ENCODE measurements at regions of chr17 and their contacts with region 1.

Region 1: DNA sequence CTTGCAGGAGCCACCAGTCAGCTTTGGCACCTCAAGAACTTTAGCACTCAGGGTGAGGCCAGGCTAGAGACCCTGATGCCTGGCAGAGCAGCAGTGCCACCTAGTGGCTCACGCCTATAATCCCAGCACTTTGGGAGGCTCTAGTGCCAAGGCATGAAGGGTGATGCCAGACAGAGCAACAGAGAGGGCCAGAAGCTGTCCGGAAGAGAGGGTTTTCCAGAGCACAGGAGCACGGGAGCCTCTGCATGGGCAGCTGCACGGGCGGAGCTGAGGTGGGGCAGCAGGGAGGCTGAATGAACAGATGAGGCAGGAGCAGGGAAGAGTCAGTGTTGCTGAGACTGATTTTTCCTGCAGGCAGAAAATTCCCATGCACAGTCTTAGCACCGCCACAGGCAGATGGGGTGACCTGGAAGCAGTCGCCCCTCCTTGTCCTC is 38.9 kb downstream of the MYH3 start:
- DNase-seq: no peak
- ATAC-seq: peak; percentile 96
- H3K4me3 ChIP-seq: no peak overlapping the region
- H3K27ac ChIP-seq: no peak overlapping the region
- H3K4me1 ChIP-seq: no peaks in the 10 kb centered on the region
- H3K27me3 ChIP-seq: no peaks in the 10 kb centered on the region
- CTCF ChIP-seq: peak; percentile 82 to 95 (median 92)
- EP300 ChIP-seq: no peak
- POLR2A ChIP-seq: no peak
- RAD21 ChIP-seq: peak; percentile 72

Region 2: GRCh38 chr17:9924735-9925191 is 693.5 kb before region 1 on chr17:
- CTCF ChIA-PET with region 1: interaction called, 63 read pairs
- POLR2A ChIA-PET with region 1: no interaction called
- RAD21 ChIA-PET with region 1: interaction called, 11 read pairs
- SMC1A ChIA-PET with region 1: interaction called, 6 read pairs
- in situ Hi-C with region 1: loop called (anchors 5 kb)
- intact Hi-C with region 1: loop called (anchors 2 kb)
- DNase-seq: peak; percentile 48
- ATAC-seq: peak; percentile 88
- H3K4me3 ChIP-seq: no peak overlapping the region
- H3K27ac ChIP-seq: no peak overlapping the region
- H3K4me1 ChIP-seq: no peaks in the 10 kb centered on the region
- H3K27me3 ChIP-seq: no peaks in the 10 kb centered on the region
- CTCF ChIP-seq: peak; percentile 78 to 90 (median 82); a peak in 4 of 6 replicates
- EP300 ChIP-seq: no peak
- POLR2A ChIP-seq: no peak
- RAD21 ChIP-seq: peak; percentile 91

Region 3: GRCh38 chr17:9971991-9972599 is 646.1 kb before region 1 on chr17:
- CTCF ChIA-PET with region 1: interaction called, 7 read pairs
- POLR2A ChIA-PET with region 1: no interaction called
- RAD21 ChIA-PET with region 1: no interaction called
- SMC1A ChIA-PET with region 1: no interaction called
- in situ Hi-C with region 1: no loop called
- intact Hi-C with region 1: loop called (anchors 5 kb)
- DNase-seq: no peak
- ATAC-seq: no peak
- H3K4me3 ChIP-seq: no peak overlapping the region
- H3K27ac ChIP-seq: no peak overlapping the region
- H3K4me1 ChIP-seq: peaks cover 7% of the 10 kb centered on the region; the same call in 1 of the 2 replicates
- H3K27me3 ChIP-seq: no peaks in the 10 kb centered on the region
- CTCF ChIP-seq: no peak
- EP300 ChIP-seq: no peak
- POLR2A ChIP-seq: no peak
- RAD21 ChIP-seq: no peak

Region 4: DNA sequence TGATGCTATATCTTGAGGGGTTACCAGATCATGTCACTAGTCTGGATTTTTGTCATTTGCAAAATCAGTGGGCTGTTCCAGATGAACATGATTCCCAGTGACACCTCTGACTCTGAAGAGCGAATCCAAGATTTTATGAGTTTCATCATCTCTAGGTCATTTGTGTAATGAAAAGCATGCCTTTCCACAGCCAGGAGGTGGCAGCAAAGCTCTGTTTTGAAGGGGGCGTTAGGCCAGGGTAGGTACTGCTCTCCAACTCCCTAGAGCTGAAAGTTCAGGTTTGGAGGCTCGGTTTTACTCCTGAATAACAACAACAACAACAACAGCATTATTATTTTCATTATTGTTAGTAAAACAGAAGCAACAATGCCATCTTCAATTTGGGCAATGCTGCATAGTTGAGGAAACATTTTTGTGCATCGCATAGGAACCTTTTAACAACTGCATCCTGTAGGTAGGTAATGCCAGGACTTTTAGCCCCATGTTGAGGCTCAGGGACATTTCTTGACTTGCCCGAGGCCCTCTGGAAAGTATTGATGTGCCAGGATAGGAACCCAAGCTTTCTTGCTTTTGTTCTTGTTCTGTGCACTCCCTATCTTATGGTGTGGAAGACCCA is 322.4 kb before region 1 on chr17:
- CTCF ChIA-PET with region 1: interaction called, 11 read pairs
- POLR2A ChIA-PET with region 1: no interaction called
- RAD21 ChIA-PET with region 1: interaction called, 4 read pairs
- SMC1A ChIA-PET with region 1: interaction called, 7 read pairs
- in situ Hi-C with region 1: no loop called
- intact Hi-C with region 1: loop called (anchors 1 kb)
- DNase-seq: peak; percentile 21
- ATAC-seq: peak; percentile 77
- H3K4me3 ChIP-seq: no peak overlapping the region
- H3K27ac ChIP-seq: no peak overlapping the region
- H3K4me1 ChIP-seq: peaks cover 17% of the 10 kb centered on the region; the same call in 1 of the 2 replicates
- H3K27me3 ChIP-seq: no peaks in the 10 kb centered on the region
- CTCF ChIP-seq: peak; percentile 72 to 79 (median 77)
- EP300 ChIP-seq: no peak
- POLR2A ChIP-seq: no peak
- RAD21 ChIP-seq: peak; percentile 58

Region 5: GRCh38 chr17:10327640-10328039 is 290.6 kb before region 1 on chr17:
- CTCF ChIA-PET with region 1: interaction called, 137 read pairs
- POLR2A ChIA-PET with region 1: no interaction called
- RAD21 ChIA-PET with region 1: interaction called, 46 read pairs
- SMC1A ChIA-PET with region 1: interaction called, 7 read pairs
- in situ Hi-C with region 1: loop called (anchors 5 kb)
- intact Hi-C with region 1: loop called (anchors 1 kb)
- DNase-seq: peak; percentile 35
- ATAC-seq: peak; percentile 93
- H3K4me3 ChIP-seq: no peak overlapping the region
- H3K27ac ChIP-seq: no peak overlapping the region
- H3K4me1 ChIP-seq: no peaks in the 10 kb centered on the region
- H3K27me3 ChIP-seq: peaks cover 0 to 1% of the 10 kb centered on the region in 2 experiments; a peak in 1 of 4 replicates
- CTCF ChIP-seq: peak; percentile 88 to 96 (median 94)
- EP300 ChIP-seq: no peak
- POLR2A ChIP-seq: no peak
- RAD21 ChIP-seq: peak; percentile 67

Region 6: GRCh38 chr17:10631048-10631700 is 13.0 kb after region 1 on chr17:
- CTCF ChIA-PET with region 1: interaction called, 138 read pairs
- POLR2A ChIA-PET with region 1: interaction called, 8 read pairs
- RAD21 ChIA-PET with region 1: interaction called, 4 read pairs
- SMC1A ChIA-PET with region 1: interaction called, 5 read pairs
- in situ Hi-C with region 1: no loop called
- intact Hi-C with region 1: no loop called
- DNase-seq: no peak
- ATAC-seq: 0 out of 3 replicates have a peak, but pooled peaks have one; percentile 29
- H3K4me3 ChIP-seq: no peak overlapping the region
- H3K27ac ChIP-seq: no peak overlapping the region
- H3K4me1 ChIP-seq: peaks cover 21% of the 10 kb centered on the region
- H3K27me3 ChIP-seq: no peaks in the 10 kb centered on the region
- CTCF ChIP-seq: peak; percentile 66 to 92 (median 89)
- EP300 ChIP-seq: no peak
- POLR2A ChIP-seq: no peak
- RAD21 ChIP-seq: peak; percentile 61

Region 7: DNA sequence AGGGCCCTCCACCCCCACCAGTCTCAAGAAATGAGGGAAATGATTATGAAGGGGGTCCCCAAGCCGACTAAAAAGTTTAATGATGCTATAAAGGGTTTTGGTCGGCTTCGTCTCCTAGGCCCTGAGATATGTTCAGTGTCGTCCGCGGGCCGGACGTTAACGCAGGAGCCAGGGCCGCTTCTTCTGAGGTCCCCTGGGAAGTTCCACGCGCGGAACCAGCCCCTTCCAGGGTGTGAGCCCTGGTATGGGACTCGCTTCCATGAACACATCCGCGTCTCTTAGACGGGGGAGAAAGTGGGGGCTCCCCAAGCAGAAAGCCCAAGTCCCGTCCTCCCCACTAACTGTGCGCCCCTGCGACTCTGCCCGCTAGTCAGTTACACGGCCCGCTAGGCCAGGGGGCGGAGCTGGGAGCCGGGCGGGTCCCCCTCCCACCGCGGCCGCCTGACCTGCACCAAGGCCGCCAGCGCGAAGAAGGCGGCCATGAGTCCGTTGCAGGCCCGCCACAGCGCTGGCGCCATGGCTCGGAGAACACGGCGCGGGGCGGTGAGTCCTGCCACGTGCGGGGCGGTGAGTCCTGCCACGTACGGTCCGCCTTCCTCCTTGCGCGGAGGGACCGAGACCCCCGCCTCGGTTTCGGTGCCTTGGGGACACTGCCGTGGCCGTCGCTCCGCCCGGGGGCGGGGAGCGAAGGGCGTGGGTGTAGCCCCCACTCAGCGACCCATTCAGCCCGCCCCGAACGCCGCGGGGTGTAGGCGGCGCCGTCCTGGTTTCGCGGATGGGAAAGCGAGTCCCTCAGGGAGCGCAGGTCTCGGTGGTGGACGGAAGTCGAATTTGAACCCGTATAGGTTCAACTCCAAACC is 111.3 kb after region 1 on chr17 and contains the start of gene TMEM220:
- CTCF ChIA-PET with region 1: no interaction called
- POLR2A ChIA-PET with region 1: no interaction called
- RAD21 ChIA-PET with region 1: no interaction called
- SMC1A ChIA-PET with region 1: no interaction called
- in situ Hi-C with region 1: no loop called
- intact Hi-C with region 1: no loop called
- DNase-seq: no peak
- ATAC-seq: peak; percentile 93
- H3K4me3 ChIP-seq: peak within 1 kb of the TSS; percentile 72
- H3K27ac ChIP-seq: no peak within 1 kb of the TSS
- H3K4me1 ChIP-seq: no peaks in the 10 kb centered on the region
- H3K27me3 ChIP-seq: no peaks in the 10 kb centered on the region; a peak in 2 of 4 replicates
- CTCF ChIP-seq: no peak
- EP300 ChIP-seq: no peak
- POLR2A ChIP-seq: peak; percentile 57
- RAD21 ChIP-seq: no peak
- polyA plus RNA-seq, gene TMEM220: 0.02 to 0.07 TPM